Aorta (tissue), 5 donors: ENCODE measurements at regions of chr6 and their contacts with region 1.

Region 1: GRCh38 chr6:35737413-35738211 is 780 bp downstream of the ARMC12 start:
- DNase-seq: no peak
- ATAC-seq: peak; percentile 89
- H3K4me3 ChIP-seq: no peak overlapping the region
- H3K27ac ChIP-seq: no peak overlapping the region
- H3K4me1 ChIP-seq: peaks cover 0 to 5% of the 10 kb centered on the region in 2 donors
- H3K27me3 ChIP-seq: no peaks in the 10 kb centered on the region

Region 2: GRCh38 chr6:35522660-35523658 is 214.7 kb before region 1 on chr6:
- intact Hi-C with region 1: loop called (anchors 1 to 2 kb)
- DNase-seq: peak; percentile 77 to 92
- ATAC-seq: peak; percentile 92
- H3K4me3 ChIP-seq: no peak overlapping the region
- H3K27ac ChIP-seq: no peak overlapping the region
- H3K4me1 ChIP-seq: no peaks in the 10 kb centered on the region
- H3K27me3 ChIP-seq: no peaks in the 10 kb centered on the region